Activated CD4-positive, alpha-beta T cell treated with anti-CD3 and anti-CD28 coated beads for 36 hours (primary cell): ENCODE measurements at regions of chr14 and their contacts with region 1.

Region 1: DNA sequence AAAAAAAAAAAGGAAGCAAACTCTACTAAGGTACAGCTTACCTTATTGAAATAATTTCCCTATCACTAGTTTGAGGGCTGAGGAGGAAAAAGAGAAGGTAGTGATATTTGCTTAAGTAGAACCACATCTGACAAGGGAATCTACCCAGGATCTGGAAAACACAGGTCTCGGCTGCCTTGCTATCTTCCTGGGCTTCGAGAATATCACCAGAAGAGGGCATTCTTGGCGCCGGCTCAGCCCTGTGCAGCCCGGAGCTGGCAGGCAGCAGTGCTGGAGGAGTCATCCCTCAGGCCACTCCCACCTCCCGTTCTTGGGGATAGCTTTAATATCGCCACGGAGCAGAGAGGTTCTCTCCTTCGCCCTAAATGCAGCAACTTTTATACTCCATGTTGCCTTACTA is 1181.2 kb downstream of the VRK1 start:
- DNase-seq: peak; percentile 93
- ATAC-seq: peak; percentile 87
- H3K4me3 Mint-ChIP-seq: peak overlapping the region; percentile 94
- H3K27ac Mint-ChIP-seq: peak overlapping the region; percentile 95
- H3K4me1 Mint-ChIP-seq: peaks cover 63% of the 10 kb centered on the region
- H3K27me3 Mint-ChIP-seq: no peaks in the 10 kb centered on the region

Region 2: DNA sequence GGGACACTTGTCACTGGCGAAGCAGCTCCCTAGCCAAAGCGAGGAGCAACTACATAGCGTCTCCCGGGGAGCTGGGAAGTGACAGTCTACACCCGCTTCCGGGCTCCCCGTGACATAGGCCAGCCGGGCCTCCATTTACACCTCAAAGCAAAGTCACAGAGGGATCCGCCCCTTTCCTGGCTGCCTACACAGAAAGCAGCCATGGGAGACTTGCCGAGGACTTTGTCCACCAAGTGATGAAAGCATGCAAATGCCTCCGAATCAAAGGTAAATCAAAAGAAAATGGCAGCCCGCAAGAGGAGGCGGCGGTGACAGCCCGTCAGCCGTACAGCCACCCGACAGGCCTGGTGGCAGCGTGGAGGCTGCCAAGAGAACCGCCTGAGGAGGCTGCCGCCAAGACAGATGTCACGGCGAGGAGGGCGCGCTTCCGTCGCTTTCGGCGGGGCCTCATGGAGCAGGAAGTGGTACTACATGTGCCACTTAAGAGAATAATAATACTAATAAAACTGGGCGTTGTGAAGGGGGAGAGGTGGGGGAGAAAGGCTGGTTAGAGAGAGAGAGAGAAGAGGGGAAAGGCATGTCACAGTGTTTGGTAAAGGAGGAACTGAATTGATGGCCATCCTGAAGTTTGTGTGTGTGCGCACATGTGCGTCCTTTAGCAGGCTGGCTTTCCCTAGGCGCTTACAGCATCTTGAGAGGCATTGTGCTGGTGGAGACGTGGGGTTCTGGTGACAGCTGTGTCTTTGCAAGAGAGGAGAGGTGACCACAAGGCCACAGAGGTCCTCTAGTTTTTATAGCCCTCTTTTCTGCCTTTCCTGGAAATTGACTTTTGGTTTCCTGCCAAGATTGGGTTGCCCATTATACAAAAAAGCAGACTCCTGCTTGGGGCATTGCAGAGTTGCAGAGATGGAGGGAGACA is 519.4 kb before region 1 on chr14:
- CTCF ChIA-PET with region 1: no interaction called
- POLR2A ChIA-PET with region 1: no interaction called
- intact Hi-C with region 1: loop called (anchors 2 to 5 kb)
- DNase-seq: peak; percentile 89
- ATAC-seq: peak; percentile 81
- H3K4me3 Mint-ChIP-seq: peak overlapping the region; percentile 87
- H3K27ac Mint-ChIP-seq: peak overlapping the region; percentile 98
- H3K4me1 Mint-ChIP-seq: peaks cover 41% of the 10 kb centered on the region
- H3K27me3 Mint-ChIP-seq: no peaks in the 10 kb centered on the region

Region 3: GRCh38 chr14:97866663-97867062 is 111.7 kb before region 1 on chr14:
- CTCF ChIA-PET with region 1: no interaction called
- POLR2A ChIA-PET with region 1: no interaction called
- intact Hi-C with region 1: loop called in 1 of 2 experiments (anchors 5 kb)
- DNase-seq: no peak
- ATAC-seq: peak; percentile 86
- H3K4me3 Mint-ChIP-seq: no peak overlapping the region
- H3K27ac Mint-ChIP-seq: no peak overlapping the region
- H3K4me1 Mint-ChIP-seq: peaks cover 19% of the 10 kb centered on the region
- H3K27me3 Mint-ChIP-seq: no peaks in the 10 kb centered on the region

Region 4: DNA sequence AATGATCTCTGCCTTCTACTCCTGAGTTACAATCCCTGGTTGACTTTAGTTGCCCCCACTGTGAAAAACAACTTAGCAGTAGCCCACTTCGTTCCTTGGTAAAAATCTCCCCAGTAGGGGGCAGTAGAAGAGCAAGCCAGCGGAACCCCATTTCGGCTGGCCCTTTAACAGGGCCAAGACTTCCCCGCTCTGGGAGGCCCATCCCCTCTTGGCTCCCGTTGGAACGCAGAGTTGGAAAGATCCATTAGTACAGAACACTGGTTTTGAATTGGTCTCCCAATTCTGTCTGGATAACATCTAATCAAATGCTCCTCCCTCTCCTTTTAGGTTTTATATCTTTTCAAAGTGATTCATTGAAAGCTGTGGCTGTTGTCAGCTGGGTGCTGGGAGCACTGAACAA is 160.3 kb after region 1 on chr14:
- CTCF ChIA-PET with region 1: interaction called, 33 read pairs
- POLR2A ChIA-PET with region 1: interaction called, 4 read pairs
- intact Hi-C with region 1: loop called (anchors 1 to 2 kb)
- DNase-seq: peak; percentile 76
- ATAC-seq: peak; percentile 43
- H3K4me3 Mint-ChIP-seq: peak overlapping the region; percentile 65
- H3K27ac Mint-ChIP-seq: peak overlapping the region; percentile 98
- H3K4me1 Mint-ChIP-seq: peaks cover 87% of the 10 kb centered on the region
- H3K27me3 Mint-ChIP-seq: no peaks in the 10 kb centered on the region

Region 5: DNA sequence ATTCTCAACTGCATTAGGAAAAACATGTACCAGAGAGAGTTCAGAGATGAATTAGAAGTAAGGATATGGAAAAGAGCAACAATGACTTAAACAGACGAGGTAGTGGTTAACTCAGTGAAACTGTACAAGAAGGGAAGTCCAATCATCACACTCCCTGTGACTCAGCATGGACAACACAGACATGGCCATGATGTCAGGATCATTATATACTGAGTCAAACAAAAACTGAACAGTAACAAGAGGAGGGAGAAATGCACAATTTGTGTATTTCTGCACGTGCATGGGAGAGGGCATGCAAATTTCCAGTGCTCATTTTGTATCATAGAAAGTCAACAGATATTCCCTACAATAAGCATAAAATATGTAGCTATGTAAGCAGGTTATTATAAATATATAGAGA is 255.9 kb after region 1 on chr14:
- CTCF ChIA-PET with region 1: interaction called, 3 read pairs
- POLR2A ChIA-PET with region 1: no interaction called
- intact Hi-C with region 1: loop called (anchors 5 to 10 kb)
- DNase-seq: peak; percentile 69
- ATAC-seq: peak; percentile 95
- H3K4me3 Mint-ChIP-seq: no peak overlapping the region
- H3K27ac Mint-ChIP-seq: peak overlapping the region; percentile 82
- H3K4me1 Mint-ChIP-seq: peaks cover 76% of the 10 kb centered on the region
- H3K27me3 Mint-ChIP-seq: no peaks in the 10 kb centered on the region

Region 6: DNA sequence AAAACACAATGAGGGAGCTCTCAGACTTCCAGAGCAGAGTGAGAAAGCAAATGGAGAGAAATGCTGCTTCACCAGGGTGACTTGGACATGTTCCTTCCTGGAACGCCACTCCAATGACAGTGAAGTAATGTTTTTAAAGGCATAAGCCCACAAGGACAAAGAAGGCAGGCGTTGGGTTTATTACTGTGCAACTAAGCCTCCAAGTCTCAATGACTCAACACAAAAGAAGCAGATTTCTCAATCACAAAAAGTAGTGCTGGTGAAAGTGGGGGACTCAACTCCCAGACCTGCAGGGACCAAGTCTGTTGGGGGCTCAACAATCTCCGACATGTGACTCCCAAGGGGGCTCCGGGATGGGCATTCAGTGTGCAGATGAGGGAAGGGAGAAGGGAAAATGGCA is 788.5 kb after region 1 on chr14:
- CTCF ChIA-PET with region 1: no interaction called
- POLR2A ChIA-PET with region 1: no interaction called
- intact Hi-C with region 1: no loop called
- DNase-seq: no peak
- ATAC-seq: no peak
- H3K4me3 Mint-ChIP-seq: no peak overlapping the region
- H3K27ac Mint-ChIP-seq: no peak overlapping the region
- H3K4me1 Mint-ChIP-seq: peaks cover 6% of the 10 kb centered on the region
- H3K27me3 Mint-ChIP-seq: no peaks in the 10 kb centered on the region

Region 7: GRCh38 chr14:99415496-99416281 is 1437.3 kb after region 1 on chr14:
- CTCF ChIA-PET with region 1: no interaction called
- POLR2A ChIA-PET with region 1: no interaction called
- intact Hi-C with region 1: loop called in 1 of 2 experiments (anchors 5 kb)
- DNase-seq: peak; percentile 74
- ATAC-seq: peak; percentile 95
- H3K4me3 Mint-ChIP-seq: no peak overlapping the region
- H3K27ac Mint-ChIP-seq: peak overlapping the region; percentile 23
- H3K4me1 Mint-ChIP-seq: peaks cover 31% of the 10 kb centered on the region
- H3K27me3 Mint-ChIP-seq: no peaks in the 10 kb centered on the region